Head of caudate nucleus (tissue), 42 donors: ENCODE measurements at regions of chr11 and their contacts with region 1.

Region 1: DNA sequence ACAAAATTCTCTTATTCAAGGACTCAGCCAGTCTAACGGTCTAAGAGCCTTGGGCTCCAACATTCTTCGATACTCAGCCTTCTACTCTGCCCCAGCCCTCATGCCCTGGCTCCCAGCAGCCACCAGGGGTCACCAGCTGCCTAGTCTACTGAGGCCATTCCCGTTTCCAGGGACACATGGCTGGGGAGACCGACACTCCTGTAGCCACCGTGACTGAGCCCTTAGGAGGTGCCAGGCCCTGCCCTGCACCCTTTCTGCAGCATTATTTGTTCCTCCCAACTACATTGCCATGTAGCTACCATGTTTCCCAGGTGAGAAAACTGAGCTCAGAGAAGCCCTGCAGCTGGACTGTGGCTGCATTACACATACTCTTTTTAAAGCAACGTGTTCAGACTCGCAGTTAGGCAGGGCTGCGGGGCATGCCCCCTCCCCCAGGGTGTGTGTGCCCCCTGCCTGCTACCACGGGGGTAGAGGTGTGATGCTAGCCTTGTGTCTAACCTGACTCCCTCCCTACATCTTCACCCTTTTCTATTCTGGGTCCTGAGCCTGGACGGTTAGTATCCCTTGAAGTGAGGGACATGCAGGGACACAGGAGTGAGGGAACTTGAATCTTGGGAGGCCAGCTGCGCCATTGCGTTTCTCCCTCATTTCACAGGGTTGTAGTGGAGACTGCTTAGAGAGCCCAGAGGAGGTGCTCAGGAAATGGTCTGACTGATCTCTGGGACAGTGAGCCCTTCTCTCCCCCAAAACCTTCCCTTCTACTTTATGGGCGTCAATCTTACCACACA is 17.5 kb downstream of the ATG16L2 start:
- DNase-seq: peak; percentile 79 to 96 (median 90)

Region 2: DNA sequence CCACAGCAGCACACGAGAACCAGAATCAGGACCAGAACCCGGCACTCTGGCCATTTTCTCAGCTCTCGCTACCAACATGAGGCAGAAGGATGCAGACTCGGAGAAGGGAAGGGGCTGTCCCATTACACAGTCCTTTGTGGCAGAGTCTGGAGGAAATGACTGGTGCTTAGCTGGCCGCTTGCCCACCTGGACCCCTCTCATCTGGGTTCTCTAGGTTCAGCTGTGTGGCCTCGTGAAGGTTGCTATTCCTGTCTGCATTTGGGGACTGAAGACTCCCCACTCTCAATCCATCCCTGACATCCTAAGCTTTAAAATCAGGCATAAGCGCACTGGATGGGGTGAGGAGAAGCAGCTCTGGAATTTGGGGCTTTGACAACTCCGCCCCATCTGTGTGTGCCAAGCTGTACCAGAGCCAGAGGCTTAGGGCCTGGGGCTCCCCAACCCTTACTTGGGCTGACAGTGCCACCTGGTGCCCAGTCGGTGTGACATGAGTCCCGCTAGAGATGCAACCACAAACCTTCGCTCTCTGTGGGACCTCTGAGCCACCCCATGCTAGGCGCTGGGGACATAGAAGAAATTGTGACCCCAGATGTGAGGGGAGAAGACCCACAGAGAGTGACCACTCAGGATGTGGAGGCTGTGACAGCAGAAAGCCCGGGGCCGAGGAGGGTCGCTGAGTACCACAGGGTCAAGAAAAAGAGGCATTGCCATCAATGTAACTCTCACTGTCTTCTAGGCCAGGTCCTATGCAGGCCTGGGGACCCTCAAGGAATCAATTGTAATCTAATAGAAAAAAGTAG is 346.3 kb after region 1 on chr11:
- intact Hi-C with region 1: loop called (anchors 5 kb)
- DNase-seq: peak; percentile 78 to 94 (median 88)